Endothelial cell of umbilical vein (primary cell): ENCODE measurements at regions of chr4 and their contacts with region 1.

Region 1: DNA sequence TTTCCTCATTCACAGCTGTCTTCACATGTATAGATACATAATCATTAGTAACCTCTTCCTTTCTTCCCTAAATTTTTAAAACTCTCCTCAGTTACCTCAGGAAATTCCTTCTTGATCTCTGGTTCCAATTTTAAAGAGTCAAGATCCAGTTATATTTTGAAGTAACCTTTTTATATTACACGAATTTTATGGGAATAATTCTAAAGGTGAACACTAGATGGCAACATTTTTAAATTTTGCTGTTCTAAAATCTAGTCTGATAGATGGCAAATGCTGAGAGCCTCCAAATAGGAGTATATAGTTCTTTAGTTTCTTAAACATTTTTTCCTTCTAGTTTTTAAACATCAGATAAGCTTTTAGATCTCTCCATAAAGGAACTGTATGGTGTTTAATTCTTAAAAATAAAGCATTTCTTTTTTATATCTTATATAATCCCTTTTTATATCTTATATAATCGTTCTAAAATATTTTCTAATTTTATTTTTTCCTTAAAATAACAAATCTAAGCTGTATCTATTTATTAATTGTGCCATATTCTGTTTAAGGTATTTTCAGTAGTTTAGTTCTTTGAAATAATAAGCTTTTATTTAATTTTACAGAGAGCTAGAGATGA is 37.9 kb upstream of the PAPSS1 start:
- DNase-seq: peak; percentile 36
- H3K4me3 ChIP-seq: no peak overlapping the region
- H3K27ac ChIP-seq: no peak overlapping the region
- H3K4me1 ChIP-seq: no peaks in the 10 kb centered on the region
- H3K27me3 ChIP-seq: peaks cover 4 to 5% of the 10 kb centered on the region in 2 experiments
- CTCF ChIP-seq: peak in 1 of 2 donors; percentile 24
- POLR2A ChIP-seq: no peak

Region 2: DNA sequence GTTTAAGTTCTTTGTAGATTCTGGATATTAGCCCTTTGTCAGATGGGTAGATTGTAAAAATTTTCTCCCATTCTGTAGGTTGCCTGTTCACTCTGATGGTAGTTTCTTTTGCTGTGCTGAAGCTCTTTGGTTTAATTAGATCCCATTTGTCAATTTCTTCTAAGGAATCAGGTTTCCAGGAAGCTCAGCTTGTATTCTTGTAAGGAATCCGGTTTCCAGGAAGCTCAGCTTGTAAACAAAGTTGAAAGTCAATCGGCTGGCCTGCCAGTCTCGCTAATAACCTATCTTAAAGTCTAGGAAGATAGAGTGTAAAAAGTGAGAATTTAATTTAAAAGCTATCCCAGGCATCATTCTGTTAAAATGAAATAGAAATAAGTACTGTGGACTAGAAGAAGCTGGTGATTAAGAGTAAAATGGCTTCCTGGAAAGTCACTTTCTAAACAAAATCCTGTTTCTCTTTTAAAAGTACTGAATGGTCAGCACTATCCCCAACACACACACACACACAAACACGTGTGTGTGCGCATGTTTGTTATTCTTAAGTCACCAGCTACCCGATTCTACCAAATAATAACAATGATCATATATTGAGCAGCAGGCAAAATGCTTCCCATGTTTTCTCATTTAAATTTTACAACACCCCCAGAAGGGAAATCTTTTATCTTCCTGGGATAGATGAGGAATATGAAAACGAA is 209.6 kb before region 1 on chr4:
- CTCF ChIA-PET with region 1: no interaction called
- POLR2A ChIA-PET with region 1: no interaction called
- dilution Hi-C with region 1: no loop called
- intact Hi-C with region 1: no loop called
- DNase-seq: peak; percentile 84
- H3K4me3 ChIP-seq: peak overlapping the region in 1 of 3 experiments; percentile 13
- H3K27ac ChIP-seq: peak overlapping the region; percentile 40
- H3K4me1 ChIP-seq: peaks cover 5% of the 10 kb centered on the region
- H3K27me3 ChIP-seq: no peaks in the 10 kb centered on the region
- CTCF ChIP-seq: no peak
- POLR2A ChIP-seq: no peak

Region 3: GRCh38 chr4:107913281-107913899 is 155.4 kb after region 1 on chr4:
- CTCF ChIA-PET with region 1: interaction called, 89 read pairs
- POLR2A ChIA-PET with region 1: no interaction called
- dilution Hi-C with region 1: no loop called
- intact Hi-C with region 1: loop called (anchors 1 kb)
- DNase-seq: peak; percentile 80
- H3K4me3 ChIP-seq: no peak overlapping the region
- H3K27ac ChIP-seq: no peak overlapping the region
- H3K4me1 ChIP-seq: no peaks in the 10 kb centered on the region
- H3K27me3 ChIP-seq: no peaks in the 10 kb centered on the region
- CTCF ChIP-seq: peak; percentile 45 to 49
- POLR2A ChIP-seq: no peak